H1 (cell line): ENCODE measurements at regions of chr16 and their contacts with region 1.

Region 1: GRCh38 chr16:89167425-89167941 is 4.1 kb upstream of the CDH15 start:
- DNase-seq: peak; percentile 81 to 99
- H3K4me3 ChIP-seq: peak overlapping the region in 1 of 4 experiments; percentile 13; a peak in 1 of 8 replicates
- H3K27ac ChIP-seq: peak overlapping the region; percentile 19; the same call in 1 of the 2 replicates
- H3K4me1 ChIP-seq: peaks cover 0 to 19% (median 13%) of the 10 kb centered on the region in 4 experiments; a peak in 6 of 7 replicates
- H3K27me3 ChIP-seq: peaks cover 0 to 6% (median 3%) of the 10 kb centered on the region in 4 experiments; a peak in 3 of 7 replicates
- CTCF ChIP-seq: peak; percentile 64 to 94 (median 93)
- EP300 ChIP-seq: no peak
- POLR2A ChIP-seq: no peak
- RAD21 ChIP-seq: peak; percentile 96

Region 2: GRCh38 chr16:88965411-88965810 is 202.1 kb before region 1 on chr16:
- CTCF ChIA-PET with region 1: no interaction called
- POLR2A ChIA-PET with region 1: no interaction called
- DNase-seq: no peak
- H3K4me3 ChIP-seq: no peak overlapping the region
- H3K27ac ChIP-seq: no peak overlapping the region
- H3K4me1 ChIP-seq: peaks cover 0 to 6% (median 3%) of the 10 kb centered on the region in 4 experiments; a peak in 2 of 7 replicates
- H3K27me3 ChIP-seq: no peaks in the 10 kb centered on the region
- CTCF ChIP-seq: no peak
- EP300 ChIP-seq: no peak
- POLR2A ChIP-seq: no peak
- RAD21 ChIP-seq: no peak

Region 3: DNA sequence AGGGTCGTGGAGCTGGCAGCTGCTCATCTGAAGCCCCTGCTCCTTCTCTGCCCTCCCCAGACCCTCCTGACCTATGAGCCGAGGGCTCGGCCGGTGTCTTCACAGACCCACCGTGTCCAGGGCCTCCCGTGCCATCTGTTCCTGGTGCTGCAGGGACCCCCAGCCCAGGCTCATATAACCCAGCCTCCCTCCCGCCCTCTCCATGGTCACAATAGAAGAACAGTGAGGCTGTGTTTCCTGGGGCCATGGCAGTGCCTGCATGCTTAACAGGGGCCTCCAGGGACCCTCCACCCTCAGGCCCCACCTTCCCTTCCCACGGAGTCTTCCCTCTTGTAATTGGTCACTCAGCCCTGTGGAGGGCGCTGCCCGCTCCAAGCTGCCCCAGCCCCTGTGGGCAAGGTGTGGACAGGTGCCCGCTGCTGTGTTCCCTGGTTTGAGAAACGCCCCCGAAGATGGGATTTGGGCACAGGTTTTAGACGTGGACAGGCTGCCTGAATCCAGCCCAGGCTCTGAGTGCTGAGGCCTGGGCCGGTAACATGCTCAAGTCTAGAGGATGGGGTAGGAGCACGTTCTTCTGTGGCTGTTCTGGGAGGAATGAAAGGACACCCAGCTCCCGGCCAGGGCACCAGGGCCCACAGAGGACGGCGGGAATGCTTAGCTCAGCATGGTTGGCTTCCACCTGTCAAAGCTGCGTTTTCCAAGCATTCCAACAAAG is 35.0 kb before region 1 on chr16:
- CTCF ChIA-PET with region 1: interaction called, 10 read pairs
- POLR2A ChIA-PET with region 1: no interaction called
- DNase-seq: no peak
- H3K4me3 ChIP-seq: no peak overlapping the region
- H3K27ac ChIP-seq: no peak overlapping the region
- H3K4me1 ChIP-seq: no peaks in the 10 kb centered on the region
- H3K27me3 ChIP-seq: no peaks in the 10 kb centered on the region
- CTCF ChIP-seq: peak; percentile 36 to 56 (median 49)
- EP300 ChIP-seq: no peak
- POLR2A ChIP-seq: no peak
- RAD21 ChIP-seq: peak in 1 of 2 experiments; percentile 35; a peak in 2 of 4 replicates

Region 4: GRCh38 chr16:89178453-89179147 is 11.1 kb after region 1 on chr16:
- CTCF ChIA-PET with region 1: interaction called, 11 read pairs
- POLR2A ChIA-PET with region 1: interaction called, 3 read pairs
- DNase-seq: no peak
- H3K4me3 ChIP-seq: no peak overlapping the region
- H3K27ac ChIP-seq: no peak overlapping the region
- H3K4me1 ChIP-seq: peaks cover 0 to 9% (median 4%) of the 10 kb centered on the region in 4 experiments; a peak in 5 of 7 replicates
- H3K27me3 ChIP-seq: no peaks in the 10 kb centered on the region; a peak in 1 of 7 replicates
- CTCF ChIP-seq: no peak
- EP300 ChIP-seq: no peak
- POLR2A ChIP-seq: no peak
- RAD21 ChIP-seq: no peak